Thyroid gland (tissue), 4 donors: ENCODE measurements at regions of chr4 and their contacts with region 1.

Region 1: DNA sequence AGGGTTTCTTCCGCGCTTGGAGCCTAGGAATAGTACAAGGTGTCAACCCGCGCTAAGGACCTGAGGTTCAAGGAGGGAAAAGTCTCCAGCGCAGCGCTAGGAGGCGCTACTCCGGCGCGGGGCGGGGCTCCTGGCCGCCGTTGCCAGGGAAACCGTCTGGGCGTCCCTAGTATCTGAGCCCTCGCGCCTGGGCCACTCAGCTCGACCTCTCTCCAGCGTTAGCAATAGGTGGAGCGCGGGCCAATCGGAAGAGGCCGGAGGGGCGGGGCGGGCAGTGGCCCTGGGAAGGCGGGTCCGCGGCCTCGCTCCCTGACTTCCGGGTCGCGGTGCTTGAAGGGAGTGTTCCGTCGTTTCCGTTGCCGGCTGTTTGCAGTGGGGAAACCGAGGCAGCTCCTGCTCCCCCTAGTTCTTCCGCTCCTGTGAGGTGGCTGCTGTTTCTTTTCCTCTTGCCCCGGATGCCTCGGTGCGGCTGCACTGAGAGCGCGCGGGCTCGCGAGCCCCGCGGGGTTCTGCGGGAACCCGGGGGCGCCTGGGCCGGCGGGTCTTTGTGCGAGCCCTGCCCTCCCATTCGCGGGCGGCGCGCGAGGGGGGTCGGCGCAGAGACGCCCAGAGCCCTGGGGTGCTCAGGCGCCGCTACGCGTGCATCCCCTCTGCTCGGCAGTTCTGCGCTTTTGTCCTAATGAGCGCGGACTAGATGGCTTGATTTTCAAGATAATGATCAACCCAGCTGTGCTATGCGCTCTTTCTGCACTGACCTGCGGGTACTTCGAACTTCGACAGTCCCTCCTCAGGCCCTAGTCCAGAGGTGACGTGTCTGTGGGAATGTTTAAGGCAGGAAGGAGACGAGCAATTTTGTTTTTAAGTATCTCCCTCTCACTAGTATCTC is at the start of gene ELMOD2:
- DNase-seq: peak; percentile 99
- H3K4me3 ChIP-seq: peak within 1 kb of the TSS; percentile 94 to 97 (median 95)
- H3K27ac ChIP-seq: peak within 1 kb of the TSS; percentile 68 to 77 (median 73)
- H3K4me1 ChIP-seq: peaks cover 3 to 10% of the 10 kb centered on the region in 2 donors
- H3K27me3 ChIP-seq: no peaks in the 10 kb centered on the region
- CTCF ChIP-seq: peak; percentile 57 to 95 (median 82)
- POLR2A ChIP-seq: peak in 1 of 2 donors; percentile 74
- total RNA-seq, gene ELMOD2: 24.7 to 41.9 (median 31.5) TPM

Region 2: DNA sequence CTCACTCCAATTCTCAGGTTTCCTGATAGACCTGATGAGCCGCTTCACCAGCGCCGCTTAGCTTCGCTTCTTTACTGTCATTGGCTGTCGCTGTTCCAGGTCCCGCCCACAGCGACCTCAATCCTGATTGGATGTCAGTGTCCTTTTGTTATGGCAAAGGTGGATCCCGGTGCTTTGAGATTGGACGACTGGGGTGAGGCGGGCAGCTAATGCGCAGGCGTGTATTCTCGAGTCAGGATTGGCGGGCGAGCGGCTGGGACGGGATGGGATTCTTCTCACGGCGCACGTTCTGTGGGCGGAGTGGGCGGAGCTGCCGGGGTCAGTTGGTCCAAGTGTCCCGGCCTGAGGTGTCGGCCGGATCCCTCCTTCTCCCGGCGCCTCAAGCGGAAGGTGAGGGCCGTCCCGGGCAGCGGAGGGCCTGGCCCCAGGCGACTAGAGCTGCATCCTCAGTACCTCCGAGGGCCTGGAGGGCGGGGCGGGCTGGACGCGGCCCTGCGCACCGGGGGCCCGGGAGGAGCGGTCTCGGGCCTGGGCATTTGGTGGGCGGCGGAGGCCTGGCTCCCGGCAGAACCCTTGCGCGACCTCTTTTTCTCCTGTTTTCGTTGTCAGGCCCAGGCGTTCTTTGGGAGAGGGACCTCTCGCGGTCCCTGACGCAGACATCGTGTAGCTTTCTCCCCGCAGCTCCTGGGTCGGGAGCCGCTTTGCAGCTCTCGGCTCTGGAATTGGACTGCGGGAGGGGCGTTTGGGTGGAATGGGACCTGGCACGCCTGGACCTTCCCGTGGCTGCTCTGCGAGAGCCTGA is 150.6 kb before region 1 on chr4 and contains the start of gene SCOC:
- intact Hi-C with region 1: loop called (anchors 10 kb)
- DNase-seq: peak; percentile 100
- H3K4me3 ChIP-seq: peak within 1 kb of the TSS; percentile 41 to 84 (median 57)
- H3K27ac ChIP-seq: peak within 1 kb of the TSS; percentile 60 to 89 (median 72)
- H3K4me1 ChIP-seq: peaks cover 9 to 14% of the 10 kb centered on the region in 2 donors
- H3K27me3 ChIP-seq: no peaks in the 10 kb centered on the region
- CTCF ChIP-seq: peak in 1 of 6 experiments; percentile 11
- POLR2A ChIP-seq: peak in 1 of 2 donors; percentile 85
- total RNA-seq, gene SCOC: 62.0 to 71.4 (median 66.0) TPM

Region 3: DNA sequence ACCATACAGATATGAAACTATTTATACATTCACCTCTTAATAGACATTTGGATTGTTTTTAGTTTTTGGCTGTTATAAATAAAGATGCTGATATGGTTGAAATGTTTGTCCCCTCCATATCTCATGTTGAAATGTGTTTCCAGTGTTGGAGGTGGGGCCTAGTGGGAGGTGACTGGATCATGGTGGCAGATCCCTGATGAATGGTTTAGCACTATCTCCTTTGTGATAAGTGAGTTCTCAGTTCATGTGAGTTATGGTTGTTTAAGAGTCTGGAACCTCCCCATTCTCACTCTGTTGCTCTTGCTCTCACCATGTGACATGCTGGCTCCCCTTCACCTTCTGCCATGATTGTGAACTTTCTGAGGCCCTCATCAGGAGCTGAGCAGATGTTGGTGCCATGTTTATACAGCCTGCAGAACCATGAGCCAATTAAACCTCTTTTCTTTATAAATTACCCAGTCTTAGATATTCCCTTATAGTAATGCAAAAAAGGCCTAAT is 84.4 kb before region 1 on chr4:
- intact Hi-C with region 1: no loop called
- DNase-seq: no peak
- H3K4me3 ChIP-seq: no peak overlapping the region
- H3K27ac ChIP-seq: no peak overlapping the region
- H3K4me1 ChIP-seq: no peaks in the 10 kb centered on the region
- H3K27me3 ChIP-seq: no peaks in the 10 kb centered on the region
- CTCF ChIP-seq: no peak
- POLR2A ChIP-seq: no peak